HepG2 (cell line): ENCODE measurements at regions of chr13 and their contacts with region 1.

Region 1: GRCh38 chr13:30334663-30335386 is 27.5 kb upstream of the KATNAL1 start:
- DNase-seq: peak; percentile 80
- ATAC-seq: peak; percentile 98
- H3K4me3 ChIP-seq: peak overlapping the region in 1 of 3 experiments; percentile 45; a peak in 2 of 6 replicates
- H3K27ac ChIP-seq: no peak overlapping the region
- H3K4me1 ChIP-seq: peaks cover 18% of the 10 kb centered on the region
- H3K27me3 ChIP-seq: 0 out of 5 replicates have a peak, but pooled peaks cover 0 to 9% of the 10 kb centered on the region in 2 experiments
- CTCF ChIP-seq: peak; percentile 92
- EP300 ChIP-seq: no peak
- POLR2A ChIP-seq: no peak
- RAD21 ChIP-seq: peak; percentile 85

Region 2: DNA sequence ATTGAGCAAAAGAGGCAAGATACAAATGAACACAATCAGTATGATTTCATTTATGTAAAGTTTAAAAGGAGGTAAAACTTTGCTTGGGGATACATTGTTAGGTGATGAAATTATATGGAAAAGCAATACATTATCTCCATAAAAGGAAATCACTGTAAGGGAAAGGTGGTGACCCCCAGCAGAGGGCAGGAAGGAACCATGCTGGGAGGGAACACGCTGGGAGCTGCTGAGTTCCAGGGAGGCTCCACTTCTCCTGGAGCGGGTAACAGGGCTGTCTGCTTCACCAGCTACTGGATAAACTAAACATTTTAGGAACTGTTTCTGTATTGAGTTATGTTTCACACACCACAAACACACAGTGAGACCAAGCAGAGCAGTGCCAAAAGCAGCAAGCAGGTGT is 118.7 kb before region 1 on chr13:
- CTCF ChIA-PET with region 1: no interaction called
- POLR2A ChIA-PET with region 1: no interaction called
- in situ Hi-C with region 1: no loop called
- intact Hi-C with region 1: loop called (anchors 2 kb)
- DNase-seq: peak; percentile 5
- ATAC-seq: peak; percentile 57; the same call in 2 of the 3 replicates
- H3K4me3 ChIP-seq: no peak overlapping the region
- H3K27ac ChIP-seq: no peak overlapping the region
- H3K4me1 ChIP-seq: no peaks in the 10 kb centered on the region
- H3K27me3 ChIP-seq: no peaks in the 10 kb centered on the region
- CTCF ChIP-seq: peak; percentile 50
- EP300 ChIP-seq: no peak
- POLR2A ChIP-seq: no peak
- RAD21 ChIP-seq: no peak

Region 3: GRCh38 chr13:30306762-30307193 is 28.0 kb before region 1 on chr13:
- CTCF ChIA-PET with region 1: no interaction called
- POLR2A ChIA-PET with region 1: no interaction called
- in situ Hi-C with region 1: no loop called
- intact Hi-C with region 1: loop called (anchors 2 kb)
- DNase-seq: peak; percentile 87
- ATAC-seq: peak; percentile 91
- H3K4me3 ChIP-seq: peak overlapping the region; percentile 81 to 93 (median 88)
- H3K27ac ChIP-seq: peak overlapping the region; percentile 90
- H3K4me1 ChIP-seq: peaks cover 51% of the 10 kb centered on the region
- H3K27me3 ChIP-seq: no peaks in the 10 kb centered on the region; a peak in 1 of 5 replicates
- CTCF ChIP-seq: no peak
- EP300 ChIP-seq: no peak
- POLR2A ChIP-seq: peak; percentile 34 to 51; a peak in 2 of 4 replicates
- RAD21 ChIP-seq: no peak

Region 4: DNA sequence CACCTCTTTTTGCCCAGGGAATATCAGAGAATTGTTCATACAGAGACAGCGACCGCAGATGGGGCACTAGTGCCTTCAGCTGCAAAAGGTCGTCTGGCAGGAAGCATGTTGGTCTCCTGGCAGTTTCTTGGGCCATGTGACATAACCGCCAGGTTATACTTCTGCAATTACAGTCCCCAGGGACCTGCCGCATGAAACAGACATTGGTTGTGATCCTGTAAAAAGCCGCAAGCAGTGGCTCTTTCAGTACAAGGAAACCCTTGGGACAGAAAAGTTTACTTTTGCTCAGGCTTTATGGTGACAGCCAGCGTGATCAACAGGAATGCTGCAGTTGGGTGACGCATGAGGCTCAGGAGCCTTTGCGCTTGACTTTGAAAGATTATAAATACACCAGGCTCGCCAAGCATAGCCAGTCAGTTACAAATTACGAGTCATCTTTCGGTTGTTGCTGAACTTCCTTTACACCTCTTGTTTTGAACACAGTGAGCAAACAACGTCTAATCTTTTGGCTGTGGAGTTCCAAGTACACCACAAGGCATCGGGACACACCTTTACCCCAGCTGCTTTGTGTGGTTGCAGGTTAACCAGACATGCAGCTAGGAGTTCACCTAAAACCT is 36.9 kb after region 1 on chr13:
- CTCF ChIA-PET with region 1: no interaction called
- POLR2A ChIA-PET with region 1: no interaction called
- in situ Hi-C with region 1: no loop called
- intact Hi-C with region 1: no loop called
- DNase-seq: peak; percentile 35
- ATAC-seq: peak; percentile 79
- H3K4me3 ChIP-seq: peak overlapping the region in 2 of 3 experiments; percentile 8 to 45; a peak in 2 of 6 replicates
- H3K27ac ChIP-seq: no peak overlapping the region
- H3K4me1 ChIP-seq: peaks cover 22% of the 10 kb centered on the region
- H3K27me3 ChIP-seq: peaks cover 1 to 4% of the 10 kb centered on the region in 2 experiments; a peak in 3 of 5 replicates
- CTCF ChIP-seq: no peak
- EP300 ChIP-seq: no peak
- POLR2A ChIP-seq: no peak
- RAD21 ChIP-seq: no peak

Region 5: DNA sequence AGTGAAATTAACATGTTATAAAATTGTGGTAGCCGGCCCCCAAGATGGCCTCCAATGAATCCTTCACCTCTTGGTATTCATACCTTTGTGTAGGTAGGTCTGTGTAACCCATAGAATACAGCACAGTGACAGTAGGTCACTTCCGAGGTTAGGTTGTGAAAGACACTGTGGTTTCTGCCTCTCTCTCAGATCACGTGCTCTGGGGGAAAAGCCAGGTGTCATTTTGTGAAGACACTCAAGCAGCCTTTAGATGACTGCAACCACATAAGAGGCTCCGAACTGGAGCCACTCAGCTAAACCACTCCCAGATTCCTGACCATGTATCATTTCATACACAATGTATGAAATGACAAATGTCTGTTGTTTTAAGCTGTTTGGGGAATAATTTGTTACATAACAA is 273.1 kb after region 1 on chr13:
- CTCF ChIA-PET with region 1: no interaction called
- POLR2A ChIA-PET with region 1: no interaction called
- in situ Hi-C with region 1: no loop called
- intact Hi-C with region 1: no loop called
- DNase-seq: no peak
- ATAC-seq: no peak
- H3K4me3 ChIP-seq: no peak overlapping the region
- H3K27ac ChIP-seq: no peak overlapping the region
- H3K4me1 ChIP-seq: no peaks in the 10 kb centered on the region
- H3K27me3 ChIP-seq: no peaks in the 10 kb centered on the region; a peak in 1 of 5 replicates
- CTCF ChIP-seq: no peak
- EP300 ChIP-seq: no peak
- POLR2A ChIP-seq: no peak
- RAD21 ChIP-seq: no peak

Region 6: DNA sequence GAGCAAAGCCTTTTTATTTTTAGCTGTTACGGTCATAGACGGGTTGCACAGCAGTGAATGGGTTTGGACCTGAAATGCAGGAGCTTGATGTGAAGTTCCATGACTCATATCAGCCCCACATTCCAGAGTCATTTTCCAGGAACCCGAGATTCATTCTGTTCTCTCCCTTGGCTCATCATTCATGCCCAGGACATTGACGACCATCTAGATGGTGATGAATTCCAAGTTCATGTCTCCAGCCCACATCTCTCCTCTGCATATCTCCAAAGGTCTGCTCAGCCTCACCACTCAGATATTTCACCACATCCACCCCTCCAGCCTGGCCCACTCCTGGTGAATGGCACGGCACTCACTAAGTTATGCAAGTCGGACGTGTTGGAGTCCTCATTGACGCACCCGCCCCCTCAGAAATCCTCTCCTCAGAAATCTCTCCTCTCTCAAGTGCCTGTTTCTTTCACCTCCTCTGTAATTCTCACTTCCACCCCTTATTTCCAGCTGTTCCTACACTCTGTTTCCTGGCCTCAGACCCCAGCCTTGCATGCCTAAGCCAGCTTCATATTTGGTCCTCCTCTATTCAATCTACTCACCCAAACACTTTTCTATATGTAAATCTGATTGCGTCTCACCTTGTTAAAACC is 483.6 kb after region 1 on chr13:
- CTCF ChIA-PET with region 1: no interaction called
- POLR2A ChIA-PET with region 1: no interaction called
- in situ Hi-C with region 1: no loop called
- intact Hi-C with region 1: no loop called
- DNase-seq: no peak
- ATAC-seq: no peak
- H3K4me3 ChIP-seq: no peak overlapping the region
- H3K27ac ChIP-seq: no peak overlapping the region
- H3K4me1 ChIP-seq: peaks cover 48% of the 10 kb centered on the region
- H3K27me3 ChIP-seq: 0 out of 5 replicates have a peak, but pooled peaks cover 0 to 1% of the 10 kb centered on the region in 2 experiments
- CTCF ChIP-seq: no peak
- EP300 ChIP-seq: no peak
- POLR2A ChIP-seq: no peak
- RAD21 ChIP-seq: no peak